Caco-2 (cell line): ENCODE measurements at regions of chr17 and their contacts with region 1.

Region 1: DNA sequence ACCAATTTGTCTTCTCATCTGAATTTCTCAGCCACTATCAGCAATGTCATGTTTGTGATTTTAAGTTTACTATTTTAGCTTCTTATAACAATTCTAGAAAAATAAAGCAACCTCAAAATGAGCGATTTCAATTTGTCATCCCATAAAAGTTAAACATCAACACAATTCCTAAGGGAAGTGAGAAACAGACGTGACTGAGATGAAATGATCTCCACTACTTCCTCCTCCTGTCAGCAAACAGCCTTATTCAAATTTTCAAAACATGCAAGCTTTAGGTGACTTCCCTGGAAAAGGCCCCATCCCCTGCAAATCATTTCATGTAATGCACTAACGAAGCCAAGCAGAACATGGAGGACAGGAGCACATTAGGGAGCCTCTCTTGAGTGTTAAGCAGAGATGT is 64.9 kb downstream of the ZNF652 start:
- DNase-seq: no peak
- H3K4me3 ChIP-seq: no peak overlapping the region
- H3K4me3 Mint-ChIP-seq: no peak overlapping the region
- H3K27ac Mint-ChIP-seq: no peak overlapping the region
- H3K4me1 ChIP-seq: no peaks in the 10 kb centered on the region
- H3K4me1 Mint-ChIP-seq: no peaks in the 10 kb centered on the region
- H3K27me3 ChIP-seq: no peaks in the 10 kb centered on the region
- H3K27me3 Mint-ChIP-seq: no peaks in the 10 kb centered on the region
- CTCF ChIP-seq: no peak

Region 2: DNA sequence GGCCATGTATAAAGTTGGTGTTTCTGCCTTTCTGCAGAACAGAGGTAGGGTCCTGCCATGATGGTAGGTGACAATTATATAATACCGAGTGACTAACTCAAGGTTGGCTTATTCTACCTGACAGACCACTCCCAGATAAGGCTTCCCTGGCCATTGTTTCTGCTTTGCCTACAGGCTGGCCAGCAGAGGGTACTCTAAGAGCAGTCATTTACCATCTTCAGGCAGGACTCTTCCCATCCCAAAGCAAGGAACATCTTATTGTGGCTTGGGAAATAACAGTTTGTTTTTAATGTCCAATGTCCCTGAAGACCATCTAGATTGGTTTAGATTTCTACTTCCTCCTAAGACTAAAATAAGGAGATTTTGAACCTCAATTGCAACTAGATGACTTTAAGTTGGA is 1115.5 kb before region 1 on chr17:
- CTCF ChIA-PET with region 1: no interaction called
- POLR2A ChIA-PET with region 1: no interaction called
- intact Hi-C with region 1: loop called (anchors 5 kb)
- DNase-seq: peak; percentile 67 to 76
- H3K4me3 ChIP-seq: no peak overlapping the region
- H3K4me3 Mint-ChIP-seq: no peak overlapping the region
- H3K27ac Mint-ChIP-seq: no peak overlapping the region
- H3K4me1 ChIP-seq: no peaks in the 10 kb centered on the region
- H3K4me1 Mint-ChIP-seq: no peaks in the 10 kb centered on the region
- H3K27me3 ChIP-seq: 0 out of 2 replicates have a peak, but pooled peaks cover 2% of the 10 kb centered on the region
- H3K27me3 Mint-ChIP-seq: peaks cover 18% of the 10 kb centered on the region
- CTCF ChIP-seq: peak; percentile 77 to 95

Region 3: DNA sequence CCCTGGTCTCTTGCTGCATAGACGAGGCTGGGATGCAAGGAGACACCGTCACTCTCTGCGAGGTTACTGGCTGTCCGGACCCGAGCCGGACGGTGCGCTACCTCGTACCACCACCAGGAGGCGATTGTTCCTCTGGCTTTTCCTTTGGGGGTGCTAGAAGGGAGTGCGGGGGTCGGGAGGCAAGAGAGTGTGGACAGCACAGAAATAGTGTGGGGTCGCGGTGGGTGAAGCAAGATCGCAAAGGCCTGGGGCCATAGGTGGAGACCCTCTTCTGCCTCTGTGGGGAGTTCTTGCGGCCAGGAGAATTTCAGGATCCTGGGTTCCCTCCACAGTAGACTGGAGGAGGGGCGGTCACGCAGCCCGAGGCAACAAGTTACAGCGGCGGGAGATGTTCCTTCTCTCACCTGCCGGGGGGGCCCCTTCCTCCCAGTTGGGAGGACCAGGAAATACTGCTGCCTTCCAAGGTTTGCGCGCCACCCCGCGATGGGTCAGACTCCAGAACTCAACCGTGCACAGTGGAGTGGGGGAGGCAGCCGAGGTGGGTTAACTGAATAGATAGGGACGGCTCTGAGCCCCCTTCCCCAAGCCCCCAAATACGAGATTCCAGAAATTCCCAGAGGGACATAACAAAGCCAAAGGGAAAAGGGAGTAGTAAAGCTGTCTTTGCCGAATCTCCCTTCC is 73.5 kb before region 1 on chr17:
- CTCF ChIA-PET with region 1: no interaction called
- POLR2A ChIA-PET with region 1: no interaction called
- intact Hi-C with region 1: no loop called
- DNase-seq: peak; percentile 94
- H3K4me3 ChIP-seq: peak overlapping the region; percentile 42
- H3K4me3 Mint-ChIP-seq: peak overlapping the region; percentile 86
- H3K27ac Mint-ChIP-seq: no peak overlapping the region
- H3K4me1 ChIP-seq: peaks cover 25% of the 10 kb centered on the region
- H3K4me1 Mint-ChIP-seq: peaks cover 21% of the 10 kb centered on the region
- H3K27me3 ChIP-seq: peaks cover 9% of the 10 kb centered on the region
- H3K27me3 Mint-ChIP-seq: peaks cover 19% of the 10 kb centered on the region
- CTCF ChIP-seq: peak; percentile 98 to 100

Region 4: DNA sequence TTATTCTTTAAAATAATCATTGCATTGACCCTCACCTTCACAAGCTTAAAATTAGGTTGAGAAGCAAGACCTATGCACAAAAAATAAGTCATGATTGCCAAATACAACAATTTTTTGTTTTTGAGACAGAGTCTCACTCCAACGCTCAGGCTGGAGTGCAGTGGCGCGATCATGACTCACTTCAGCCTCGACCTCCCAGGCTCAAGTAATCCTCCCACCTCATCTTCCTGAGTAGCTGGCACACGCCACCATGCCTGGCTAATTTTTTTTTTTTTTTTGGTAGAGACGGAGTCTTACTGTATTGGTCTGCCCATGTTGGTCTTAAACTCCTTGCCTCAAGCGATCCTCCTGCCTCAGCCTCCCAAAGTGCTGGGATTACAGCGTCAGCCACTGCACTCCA is 40.7 kb after region 1 on chr17:
- CTCF ChIA-PET with region 1: no interaction called
- POLR2A ChIA-PET with region 1: no interaction called
- intact Hi-C with region 1: no loop called
- DNase-seq: no peak
- H3K4me3 ChIP-seq: no peak overlapping the region
- H3K4me3 Mint-ChIP-seq: no peak overlapping the region
- H3K27ac Mint-ChIP-seq: no peak overlapping the region
- H3K4me1 ChIP-seq: no peaks in the 10 kb centered on the region
- H3K4me1 Mint-ChIP-seq: peaks cover 5% of the 10 kb centered on the region
- H3K27me3 ChIP-seq: no peaks in the 10 kb centered on the region
- H3K27me3 Mint-ChIP-seq: no peaks in the 10 kb centered on the region
- CTCF ChIP-seq: no peak